A549 (cell line): ENCODE measurements at regions of chrX and their contacts with region 1.

Region 1: GRCh38 chrX:39795605-39796004 is 302.2 kb downstream of the BCOR start:
- DNase-seq: no peak
- ATAC-seq: no peak
- H3K4me3 ChIP-seq: no peak overlapping the region
- H3K27ac ChIP-seq: no peak overlapping the region
- H3K4me1 ChIP-seq: no peaks in the 10 kb centered on the region
- CTCF ChIP-seq: no peak
- EP300 ChIP-seq: no peak
- POLR2A ChIP-seq: no peak
- RAD21 ChIP-seq: no peak

Region 2: DNA sequence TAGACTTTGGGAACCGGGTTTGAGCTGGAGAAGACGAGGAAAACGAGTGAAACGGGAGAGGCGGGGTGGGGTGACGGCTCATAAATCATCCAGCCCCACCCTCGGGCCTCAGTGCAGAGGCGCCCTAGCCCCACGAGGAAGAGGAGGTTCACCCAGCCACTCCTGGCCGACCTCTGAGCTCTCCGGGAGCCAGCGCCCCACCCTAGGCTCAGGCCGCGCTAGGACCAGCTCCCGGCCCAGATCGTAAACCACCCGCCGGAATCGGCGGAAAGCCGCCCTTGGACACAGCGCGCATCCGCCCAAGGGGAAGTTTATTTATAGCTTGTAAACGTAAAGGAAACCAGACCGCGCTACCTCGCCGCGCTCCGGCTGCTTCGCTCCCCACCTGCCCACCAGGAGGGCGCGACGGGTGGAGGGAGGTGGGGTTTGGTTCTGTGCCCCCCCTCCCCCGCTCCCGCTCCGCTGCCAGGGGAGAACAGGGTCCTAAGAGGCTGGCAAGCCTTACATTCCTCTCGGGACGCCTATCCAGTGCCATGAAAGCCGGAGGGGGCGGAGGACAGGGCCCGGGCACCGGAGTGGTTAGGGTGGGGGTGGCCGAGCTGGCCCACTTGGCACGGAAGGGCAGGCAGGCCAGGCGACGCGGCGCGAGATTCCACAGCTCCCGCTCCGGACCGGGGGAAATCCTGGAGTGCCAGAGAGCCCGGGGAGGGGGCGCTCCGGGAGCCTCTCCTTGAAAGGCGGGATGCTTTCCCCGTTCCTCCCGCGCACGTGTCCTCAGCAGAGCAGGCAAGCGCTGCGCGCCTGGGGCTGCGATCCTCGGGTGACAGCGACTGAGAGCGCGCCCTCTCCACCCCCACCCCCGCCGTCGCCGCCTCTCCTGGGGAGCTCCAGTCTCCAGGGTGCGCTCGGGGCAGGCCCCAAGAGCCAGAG is 217.9 kb after region 1 on chrX:
- CTCF ChIA-PET with region 1: no interaction called
- POLR2A ChIA-PET with region 1: interaction called, 13 read pairs
- DNase-seq: peak; percentile 28 to 67
- ATAC-seq: peak; percentile 63 to 82
- H3K4me3 ChIP-seq: peak overlapping the region; percentile 88
- H3K27ac ChIP-seq: peak overlapping the region; percentile 96 to 98
- H3K4me1 ChIP-seq: peaks cover 7% of the 10 kb centered on the region
- CTCF ChIP-seq: no peak
- EP300 ChIP-seq: no peak
- POLR2A ChIP-seq: peak; percentile 29
- RAD21 ChIP-seq: no peak